Right cardiac atrium (tissue), 5 donors: ENCODE measurements at regions of chr18 and their contacts with region 1.

Region 1: GRCh38 chr18:34787931-34788532 is 77.9 kb downstream of the DTNA start:
- DNase-seq: no peak
- ATAC-seq: peak; percentile 59 to 65
- H3K4me3 ChIP-seq: no peak overlapping the region
- H3K27ac ChIP-seq: no peak overlapping the region
- H3K4me1 ChIP-seq: no peaks in the 10 kb centered on the region
- H3K27me3 ChIP-seq: no peaks in the 10 kb centered on the region

Region 2: DNA sequence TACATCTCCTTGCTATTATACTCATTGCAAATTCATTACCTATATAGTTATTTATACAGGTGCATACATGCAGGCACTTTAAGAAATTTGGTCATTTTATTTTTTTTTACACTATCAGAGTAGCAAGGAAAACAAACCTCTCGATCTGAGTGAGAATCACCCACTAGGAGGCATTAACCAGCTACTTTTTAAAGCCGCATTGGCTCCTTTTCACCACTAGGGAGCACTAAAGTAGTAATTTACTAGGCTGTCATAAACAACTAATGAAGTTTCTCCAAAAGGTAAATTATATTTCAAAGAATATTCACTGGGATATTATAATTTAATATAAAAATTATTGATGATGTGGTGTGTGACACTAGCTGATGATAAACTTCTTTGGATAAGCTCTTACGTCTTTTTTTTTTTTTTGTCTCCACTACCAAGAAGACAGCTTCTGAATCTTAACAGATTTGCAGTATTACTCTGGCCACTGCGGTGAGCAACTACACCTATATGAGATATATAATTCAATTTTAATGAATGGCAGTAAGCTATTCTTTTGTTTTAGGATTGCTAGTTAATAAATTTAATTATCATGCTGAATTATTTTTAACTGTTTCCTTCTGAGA is 665.2 kb before region 1 on chr18:
- intact Hi-C with region 1: loop called in 1 of 4 experiments (anchors 10 kb)
- DNase-seq: no peak
- ATAC-seq: no peak
- H3K4me3 ChIP-seq: no peak overlapping the region
- H3K27ac ChIP-seq: no peak overlapping the region
- H3K4me1 ChIP-seq: no peaks in the 10 kb centered on the region
- H3K27me3 ChIP-seq: no peaks in the 10 kb centered on the region

Region 3: GRCh38 chr18:34352385-34353163 is 435.5 kb before region 1 on chr18:
- intact Hi-C with region 1: loop called in 3 of 4 experiments (anchors 5 to 10 kb)
- DNase-seq: no peak
- ATAC-seq: no peak
- H3K4me3 ChIP-seq: no peak overlapping the region
- H3K27ac ChIP-seq: no peak overlapping the region
- H3K4me1 ChIP-seq: no peaks in the 10 kb centered on the region
- H3K27me3 ChIP-seq: no peaks in the 10 kb centered on the region

Region 4: DNA sequence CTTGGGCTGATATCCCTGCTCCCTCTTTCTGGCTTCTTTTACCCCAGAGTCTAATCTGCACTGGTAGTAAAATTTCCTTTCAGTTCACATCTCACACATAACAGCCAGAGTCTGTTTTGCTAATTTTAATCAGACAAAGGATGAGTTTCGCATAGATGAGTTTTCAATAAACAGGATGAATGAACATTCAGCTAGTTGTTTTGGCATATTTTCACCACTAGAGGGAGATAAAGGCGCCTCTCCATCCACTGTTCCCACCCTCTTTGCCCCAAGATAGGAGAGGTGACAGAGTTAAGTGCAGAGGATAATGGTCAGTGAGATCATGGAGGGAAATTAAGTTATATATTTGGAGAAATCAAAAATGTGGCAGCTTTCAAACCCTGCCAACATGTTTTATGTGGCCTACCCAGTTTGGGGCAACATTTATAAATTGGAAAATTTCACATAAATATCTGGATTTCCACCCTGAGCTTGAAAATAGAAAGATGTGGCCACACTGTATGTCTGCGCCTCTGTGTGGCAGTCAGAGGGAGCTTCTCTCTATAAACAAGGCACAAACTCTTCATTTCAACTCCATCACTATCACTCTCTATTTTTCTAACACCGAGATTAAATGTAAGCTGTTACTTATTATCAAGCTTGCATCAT is 126.4 kb before region 1 on chr18:
- intact Hi-C with region 1: loop called in 2 of 4 experiments (anchors 5 to 10 kb)
- DNase-seq: no peak
- ATAC-seq: peak; percentile 43 to 66
- H3K4me3 ChIP-seq: no peak overlapping the region
- H3K27ac ChIP-seq: no peak overlapping the region
- H3K4me1 ChIP-seq: no peaks in the 10 kb centered on the region
- H3K27me3 ChIP-seq: no peaks in the 10 kb centered on the region

Region 5: GRCh38 chr18:34691614-34692013 is 96.4 kb before region 1 on chr18:
- intact Hi-C with region 1: no loop called
- DNase-seq: no peak
- ATAC-seq: peak in 1 of 2 donors; percentile 33
- H3K4me3 ChIP-seq: no peak overlapping the region
- H3K27ac ChIP-seq: no peak overlapping the region
- H3K4me1 ChIP-seq: no peaks in the 10 kb centered on the region
- H3K27me3 ChIP-seq: no peaks in the 10 kb centered on the region